ENCODE measurements at regions of chr14 and their contacts with region 1.

Region 1: GRCh38 chr14:21263656-21264411 is 5.4 kb downstream of the HNRNPC start:
- DNase-seq: no peak
- ATAC-seq: peak; percentile 68
- H3K4me3 Mint-ChIP-seq: peak overlapping the region; percentile 94
- H3K27ac Mint-ChIP-seq: peak overlapping the region; percentile 100
- H3K4me1 Mint-ChIP-seq: peaks cover 63% of the 10 kb centered on the region
- H3K27me3 Mint-ChIP-seq: no peaks in the 10 kb centered on the region
- CTCF ChIP-seq: no peak

Region 2: GRCh38 chr14:21233457-21234076 is 30.3 kb before region 1 on chr14:
- CTCF ChIA-PET with region 1: interaction called, 3 read pairs
- POLR2A ChIA-PET with region 1: interaction called, 12 read pairs
- intact Hi-C with region 1: no loop called
- DNase-seq: no peak
- ATAC-seq: no peak
- H3K4me3 Mint-ChIP-seq: peak overlapping the region; percentile 28
- H3K27ac Mint-ChIP-seq: peak overlapping the region; percentile 76
- H3K4me1 Mint-ChIP-seq: peaks cover 89% of the 10 kb centered on the region
- H3K27me3 Mint-ChIP-seq: no peaks in the 10 kb centered on the region
- CTCF ChIP-seq: peak; percentile 34

Region 3: GRCh38 chr14:21241218-21241819 is 22.5 kb before region 1 on chr14:
- CTCF ChIA-PET with region 1: interaction called, 9 read pairs
- POLR2A ChIA-PET with region 1: interaction called, 45 read pairs
- intact Hi-C with region 1: no loop called
- DNase-seq: no peak
- ATAC-seq: no peak
- H3K4me3 Mint-ChIP-seq: no peak overlapping the region
- H3K27ac Mint-ChIP-seq: peak overlapping the region; percentile 79
- H3K4me1 Mint-ChIP-seq: peaks cover 76% of the 10 kb centered on the region
- H3K27me3 Mint-ChIP-seq: no peaks in the 10 kb centered on the region
- CTCF ChIP-seq: peak; percentile 62

Region 4: DNA sequence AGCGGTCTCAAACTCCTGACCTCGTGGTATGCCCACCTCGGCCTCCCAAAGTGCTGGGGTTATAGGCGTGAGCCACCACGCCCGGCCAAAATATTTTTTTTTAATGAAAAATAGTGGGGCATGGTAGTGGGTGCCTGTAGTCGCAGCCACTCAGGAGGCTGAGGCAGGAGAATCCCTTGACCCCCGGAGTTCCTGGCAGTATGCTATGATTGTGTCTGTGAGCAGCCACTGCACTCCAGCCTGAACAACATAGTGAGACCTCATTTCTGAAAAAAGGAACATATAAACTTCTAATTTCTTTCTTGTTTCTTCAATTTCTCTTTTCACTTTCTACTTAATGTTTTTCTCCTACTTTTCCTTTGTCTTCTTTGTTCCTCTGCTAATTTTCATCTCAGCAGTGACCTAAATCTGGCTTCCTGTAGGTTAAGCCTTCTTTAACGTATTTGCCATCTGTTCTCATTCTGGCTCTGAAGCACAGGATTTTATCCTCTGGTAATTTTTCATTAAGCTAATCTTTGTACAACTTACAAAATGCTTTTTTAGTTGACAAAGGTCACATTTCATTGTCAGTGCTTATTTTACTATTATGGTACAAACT is 11.5 kb after region 1 on chr14:
- CTCF ChIA-PET with region 1: no interaction called
- POLR2A ChIA-PET with region 1: interaction called, 14 read pairs
- intact Hi-C with region 1: no loop called
- DNase-seq: no peak
- ATAC-seq: no peak
- H3K4me3 Mint-ChIP-seq: no peak overlapping the region
- H3K27ac Mint-ChIP-seq: no peak overlapping the region
- H3K4me1 Mint-ChIP-seq: peaks cover 4% of the 10 kb centered on the region
- H3K27me3 Mint-ChIP-seq: no peaks in the 10 kb centered on the region
- CTCF ChIP-seq: no peak

Region 5: DNA sequence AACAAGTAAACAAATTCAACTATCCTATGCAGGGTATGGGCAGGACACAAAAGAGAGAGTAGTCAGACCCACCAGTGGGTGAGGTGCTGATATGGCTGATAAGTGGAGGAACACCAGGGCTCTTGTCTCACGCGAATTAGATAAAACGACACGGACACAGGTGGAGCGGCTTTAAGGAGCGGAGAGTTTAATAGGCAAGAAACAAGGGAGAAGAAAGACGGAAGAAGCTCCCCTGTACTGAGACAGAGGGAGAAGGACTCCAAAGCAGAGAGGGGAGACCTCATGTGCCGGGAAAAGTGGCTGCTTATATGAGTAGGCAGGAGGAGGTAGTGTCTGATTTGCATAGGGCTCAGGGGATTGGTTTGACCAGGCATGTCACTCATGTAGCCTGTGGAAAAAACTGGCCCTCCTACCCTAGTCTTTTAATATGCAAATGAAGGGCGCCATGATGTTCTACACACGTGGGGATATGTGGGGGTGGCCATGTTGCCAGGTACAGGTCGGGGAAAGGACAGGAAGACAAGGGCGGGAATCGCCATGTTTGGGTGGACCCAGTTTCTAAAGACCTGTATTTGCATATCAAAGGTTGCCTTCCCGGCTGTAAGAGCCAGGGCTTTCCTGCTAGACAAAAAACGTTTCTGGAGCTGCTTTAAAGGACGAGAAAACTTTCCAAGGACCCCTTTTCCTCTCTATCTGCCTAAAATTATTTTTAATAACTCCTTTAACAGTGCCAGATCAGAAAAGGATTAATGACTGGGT is 44.8 kb after region 1 on chr14:
- CTCF ChIA-PET with region 1: no interaction called
- POLR2A ChIA-PET with region 1: interaction called, 10 read pairs
- intact Hi-C with region 1: loop called (anchors 5 kb)
- DNase-seq: peak; percentile 91
- ATAC-seq: peak; percentile 93
- H3K4me3 Mint-ChIP-seq: peak overlapping the region; percentile 68
- H3K27ac Mint-ChIP-seq: peak overlapping the region; percentile 81
- H3K4me1 Mint-ChIP-seq: peaks cover 24% of the 10 kb centered on the region
- H3K27me3 Mint-ChIP-seq: no peaks in the 10 kb centered on the region
- CTCF ChIP-seq: no peak

Region 6: GRCh38 chr14:21383848-21384493 is 120.1 kb after region 1 on chr14 and contains the start of gene SUPT16H:
- CTCF ChIA-PET with region 1: interaction called, 3 read pairs
- POLR2A ChIA-PET with region 1: interaction called, 50 read pairs
- intact Hi-C with region 1: loop called (anchors 2 kb)
- DNase-seq: peak; percentile 98
- ATAC-seq: peak; percentile 90
- H3K4me3 Mint-ChIP-seq: peak within 1 kb of the TSS; percentile 86
- H3K27ac Mint-ChIP-seq: peak within 1 kb of the TSS; percentile 99
- H3K4me1 Mint-ChIP-seq: peaks cover 34% of the 10 kb centered on the region
- H3K27me3 Mint-ChIP-seq: no peaks in the 10 kb centered on the region
- CTCF ChIP-seq: no peak
- total RNA-seq, gene SUPT16H: 171 to 173 TPM